Activated CD8-positive, alpha-beta memory T cell treated with anti-CD3 and anti-CD28 coated beads, Interleukin-2, amount 10 ng/mL, durations not matched to agents 7 days and 5 days (primary cell): ENCODE measurements at regions of chr10 and their contacts with region 1.

Region 1: DNA sequence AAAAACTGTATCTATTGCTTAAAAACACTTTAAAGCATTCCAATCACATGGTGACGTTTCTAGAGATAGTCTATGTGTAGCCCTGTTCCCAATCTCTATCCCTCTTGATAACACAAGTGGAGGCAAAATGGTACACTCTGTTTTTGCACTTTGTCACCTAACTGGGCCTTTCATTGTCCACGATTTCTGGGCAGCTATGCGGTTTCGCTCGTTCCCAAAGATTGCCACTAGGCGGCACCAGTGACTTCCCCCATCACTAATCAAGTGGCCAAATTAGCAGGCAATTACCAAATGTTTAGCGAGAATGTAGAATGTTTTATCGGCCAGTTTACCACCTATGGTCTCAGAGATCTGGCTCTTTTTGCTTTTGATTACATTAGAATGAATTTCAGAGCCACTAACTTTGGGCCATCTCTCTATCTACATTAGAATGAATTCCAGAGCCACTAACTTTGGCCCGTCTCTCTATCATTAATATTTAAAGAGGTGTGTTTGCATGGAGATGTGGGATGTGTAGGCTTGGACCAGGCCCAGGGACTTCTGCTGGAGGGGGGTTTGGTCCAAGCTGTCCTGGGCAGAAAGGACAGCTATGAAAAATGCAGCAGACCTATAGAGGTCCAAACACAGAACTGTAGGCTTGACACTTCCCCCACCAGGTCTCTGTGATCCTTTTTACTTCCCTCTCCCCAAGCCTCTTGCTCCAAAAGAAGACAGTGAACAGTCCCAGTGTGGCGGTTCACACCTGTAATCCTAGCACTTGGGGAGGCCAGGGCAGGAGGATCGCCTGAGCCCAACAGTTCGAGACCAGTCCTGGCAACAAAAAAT is 90.1 kb downstream of the EPC1 start:
- DNase-seq: peak; percentile 79
- ATAC-seq: peak; percentile 86
- H3K4me3 Mint-ChIP-seq: no peak overlapping the region
- H3K27ac Mint-ChIP-seq: no peak overlapping the region
- H3K4me1 Mint-ChIP-seq: peaks cover 23% of the 10 kb centered on the region
- H3K27me3 Mint-ChIP-seq: no peaks in the 10 kb centered on the region

Region 2: GRCh38 chr10:32180371-32181280 is 76.2 kb before region 1 on chr10:
- CTCF ChIA-PET with region 1: no interaction called
- DNase-seq: no peak
- ATAC-seq: no peak
- H3K4me3 Mint-ChIP-seq: no peak overlapping the region
- H3K27ac Mint-ChIP-seq: no peak overlapping the region
- H3K4me1 Mint-ChIP-seq: no peaks in the 10 kb centered on the region
- H3K27me3 Mint-ChIP-seq: no peaks in the 10 kb centered on the region

Region 3: DNA sequence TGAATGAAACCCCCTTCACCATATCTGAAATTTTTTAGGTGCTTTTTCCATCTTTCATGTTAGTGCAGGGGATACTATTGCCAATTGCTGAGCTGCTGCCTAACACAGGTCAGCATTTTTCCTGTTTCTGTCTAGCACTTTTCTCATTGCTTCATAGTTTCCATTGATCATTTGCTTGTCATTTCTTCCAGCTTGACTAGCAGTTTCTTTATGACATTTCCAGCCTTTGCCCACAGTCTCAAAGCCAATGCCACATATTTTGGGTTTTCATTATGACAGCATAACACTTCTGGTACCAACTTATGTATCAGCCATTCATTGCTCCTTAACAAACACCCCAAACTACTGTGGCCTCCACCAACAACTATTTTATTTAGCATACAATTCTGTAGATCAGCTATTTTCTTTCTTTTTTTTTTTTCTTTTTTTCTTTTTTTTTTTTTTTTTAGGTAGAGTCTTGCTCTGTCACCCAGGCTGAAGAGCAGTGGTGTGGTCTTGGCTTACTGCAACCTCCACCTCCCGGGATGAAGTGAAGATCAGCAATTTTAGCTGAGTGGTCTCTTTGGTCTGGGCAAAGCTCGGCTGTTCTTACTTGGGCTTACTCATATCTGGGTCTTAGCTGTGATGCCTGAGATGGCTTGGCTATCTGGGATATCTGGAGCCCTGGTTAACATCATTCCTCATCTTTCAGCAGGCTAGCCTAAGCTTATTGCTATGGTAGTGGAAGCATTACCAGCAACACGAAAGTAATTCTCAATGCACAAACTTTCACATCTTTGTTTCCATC is 12.2 kb before region 1 on chr10:
- CTCF ChIA-PET with region 1: interaction called, 17 read pairs
- DNase-seq: peak; percentile 66
- ATAC-seq: peak; percentile 91
- H3K4me3 Mint-ChIP-seq: no peak overlapping the region
- H3K27ac Mint-ChIP-seq: peak overlapping the region; percentile 44
- H3K4me1 Mint-ChIP-seq: peaks cover 21% of the 10 kb centered on the region
- H3K27me3 Mint-ChIP-seq: no peaks in the 10 kb centered on the region

Region 4: GRCh38 chr10:32346134-32346550 is 89.3 kb after region 1 on chr10:
- CTCF ChIA-PET with region 1: interaction called, 31 read pairs
- DNase-seq: peak; percentile 98
- ATAC-seq: peak; percentile 88
- H3K4me3 Mint-ChIP-seq: peak overlapping the region; percentile 93
- H3K27ac Mint-ChIP-seq: peak overlapping the region; percentile 100
- H3K4me1 Mint-ChIP-seq: peaks cover 61% of the 10 kb centered on the region
- H3K27me3 Mint-ChIP-seq: no peaks in the 10 kb centered on the region

Region 5: DNA sequence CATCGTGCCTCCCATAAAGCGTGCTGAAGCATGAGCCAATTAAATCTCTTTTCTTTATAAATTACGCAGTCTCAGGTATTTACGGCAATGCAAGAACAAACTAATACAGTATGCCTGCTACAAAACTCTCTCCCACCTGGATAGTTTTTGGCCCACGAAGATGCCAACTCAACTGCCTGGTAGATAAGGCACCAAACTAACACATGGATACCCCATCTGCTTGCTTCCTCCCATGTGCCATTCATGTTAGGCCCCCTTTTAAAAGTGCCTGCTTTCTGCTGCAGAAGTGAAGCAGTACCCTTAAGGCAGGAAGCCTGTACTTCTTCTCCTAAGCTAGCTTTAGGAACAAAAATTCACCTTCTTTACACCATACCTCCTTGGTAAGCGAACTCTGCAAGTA is 105.7 kb after region 1 on chr10:
- CTCF ChIA-PET with region 1: interaction called, 26 read pairs
- DNase-seq: no peak
- ATAC-seq: no peak
- H3K4me3 Mint-ChIP-seq: no peak overlapping the region
- H3K27ac Mint-ChIP-seq: peak overlapping the region; percentile 64
- H3K4me1 Mint-ChIP-seq: peaks cover 68% of the 10 kb centered on the region
- H3K27me3 Mint-ChIP-seq: no peaks in the 10 kb centered on the region

Region 6: GRCh38 chr10:32367793-32368453 is 111.1 kb after region 1 on chr10:
- CTCF ChIA-PET with region 1: interaction called, 26 read pairs
- DNase-seq: peak; percentile 80
- ATAC-seq: peak; percentile 54
- H3K4me3 Mint-ChIP-seq: no peak overlapping the region
- H3K27ac Mint-ChIP-seq: peak overlapping the region; percentile 65
- H3K4me1 Mint-ChIP-seq: peaks cover 43% of the 10 kb centered on the region
- H3K27me3 Mint-ChIP-seq: no peaks in the 10 kb centered on the region